AG04449 (cell line): ENCODE measurements at regions of chr7 and their contacts with region 1.

Region 1: GRCh38 chr7:117157241-117158209 is 165.3 kb downstream of the WNT2 start:
- DNase-seq: peak; percentile 82
- H3K4me3 ChIP-seq: no peak overlapping the region
- CTCF ChIP-seq: peak; percentile 42

Region 2: DNA sequence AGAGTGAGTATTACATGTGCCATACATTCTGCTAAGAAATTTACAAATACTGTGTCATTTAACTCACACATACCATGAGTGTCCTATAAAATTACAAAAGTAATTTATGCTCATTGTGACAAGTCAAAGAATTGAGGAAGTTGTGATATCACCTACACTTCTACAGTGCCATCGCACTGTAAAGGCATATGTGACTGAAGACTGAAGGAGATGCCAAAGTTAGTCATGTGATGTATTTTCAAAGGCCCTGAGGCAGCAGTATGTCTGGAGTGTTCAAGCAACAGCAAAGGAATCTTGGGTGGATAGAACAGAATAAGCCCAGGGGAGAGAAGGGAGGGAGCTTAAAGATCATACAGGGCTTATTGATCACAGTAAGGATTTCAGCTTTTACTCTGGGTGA is 11.5 kb before region 1 on chr7:
- CTCF ChIA-PET with region 1: interaction called, 24 read pairs
- POLR2A ChIA-PET with region 1: no interaction called
- DNase-seq: no peak
- H3K4me3 ChIP-seq: no peak overlapping the region
- CTCF ChIP-seq: no peak